HAP-1 (cell line): ENCODE measurements at regions of chr10 and their contacts with region 1.

Region 1: DNA sequence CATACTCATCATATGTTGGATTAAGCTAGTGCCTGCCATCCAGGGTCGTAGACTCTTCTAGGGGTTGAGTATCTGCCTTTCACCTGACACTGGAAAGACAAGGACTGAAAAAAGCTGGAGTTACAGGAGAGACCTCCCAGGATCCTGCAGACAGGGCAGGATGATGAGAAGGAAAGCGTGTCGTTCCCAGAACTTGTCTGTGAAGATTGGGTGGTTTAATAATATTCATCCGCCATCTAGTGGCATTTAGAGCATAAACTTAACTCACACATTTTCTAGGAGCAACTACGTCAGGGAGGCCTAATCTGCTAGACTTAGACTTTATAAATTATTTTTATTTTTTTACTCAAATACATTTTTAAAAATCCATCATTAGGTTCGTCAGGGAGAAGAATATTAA is 59.6 kb downstream of the ADRB1 start:
- DNase-seq: peak; percentile 35 to 71
- H3K4me3 ChIP-seq: no peak overlapping the region
- H3K4me1 ChIP-seq: 0 out of 2 replicates have a peak, but pooled peaks cover 2% of the 10 kb centered on the region
- H3K27me3 ChIP-seq: peaks cover 12% of the 10 kb centered on the region

Region 2: DNA sequence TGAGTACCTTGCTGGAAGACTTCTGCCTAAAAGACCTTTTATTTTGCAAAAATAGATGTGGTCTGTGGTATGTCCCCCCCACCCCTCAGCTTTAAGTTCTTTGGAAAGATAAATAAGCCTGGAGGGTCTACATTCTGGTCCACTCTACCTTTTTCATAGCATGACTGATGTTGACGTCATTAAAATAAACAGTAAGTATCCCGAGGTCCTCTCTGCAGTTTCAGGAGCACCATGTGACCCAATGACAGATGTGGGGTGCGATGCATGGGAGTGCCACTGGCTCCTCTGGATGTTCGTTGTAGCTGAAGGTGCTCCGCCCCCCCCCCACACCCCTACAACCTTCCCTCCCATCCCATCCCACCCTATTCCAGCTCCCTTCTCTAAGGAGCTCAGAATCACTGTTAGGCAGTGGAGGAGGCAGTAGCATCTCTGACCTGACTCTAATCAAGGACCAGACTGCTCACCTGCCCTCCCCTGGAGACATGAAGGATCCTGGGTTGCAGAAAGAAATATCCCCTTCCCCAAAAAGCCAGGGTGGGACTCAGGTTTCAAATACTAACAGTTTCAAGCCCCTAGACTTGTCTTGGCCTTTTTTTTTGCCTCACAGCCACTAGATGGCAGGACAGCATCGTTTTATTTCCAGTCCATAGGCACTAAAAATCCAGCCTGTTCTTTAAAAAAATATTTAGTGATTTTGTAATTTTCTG is 398.5 kb before region 1 on chr10:
- in situ Hi-C with region 1: loop called (anchors 5 kb)
- DNase-seq: peak; percentile 36 to 51
- H3K4me3 ChIP-seq: no peak overlapping the region
- H3K4me1 ChIP-seq: no peaks in the 10 kb centered on the region
- H3K27me3 ChIP-seq: no peaks in the 10 kb centered on the region

Region 3: GRCh38 chr10:113765910-113766309 is 337.4 kb before region 1 on chr10:
- in situ Hi-C with region 1: no loop called
- DNase-seq: no peak
- H3K4me3 ChIP-seq: no peak overlapping the region
- H3K4me1 ChIP-seq: peaks cover 5% of the 10 kb centered on the region; the same call in 1 of the 2 replicates
- H3K27me3 ChIP-seq: peaks cover 15% of the 10 kb centered on the region

Region 4: DNA sequence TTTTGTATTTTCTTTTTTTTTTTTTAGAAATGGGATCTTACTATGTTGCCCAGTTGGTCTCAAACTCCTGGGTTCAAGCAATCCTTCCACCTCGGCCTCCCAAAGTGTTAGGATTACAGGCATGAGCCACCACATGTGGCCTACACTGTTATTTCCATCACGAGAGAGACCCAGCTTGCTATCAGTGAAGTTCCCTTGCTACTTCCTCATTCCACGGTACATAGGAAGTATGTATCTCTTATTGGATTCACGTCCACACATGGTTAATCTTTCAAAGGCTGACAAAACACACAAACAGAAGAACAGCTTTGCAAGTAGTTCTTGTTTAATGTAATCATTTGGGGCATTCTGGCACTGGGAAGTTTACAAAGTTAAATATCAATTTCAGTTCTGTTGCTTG is 300.3 kb before region 1 on chr10:
- in situ Hi-C with region 1: loop called (anchors 5 kb)
- DNase-seq: no peak
- H3K4me3 ChIP-seq: no peak overlapping the region
- H3K4me1 ChIP-seq: no peaks in the 10 kb centered on the region; the same call in 1 of the 2 replicates
- H3K27me3 ChIP-seq: peaks cover 3% of the 10 kb centered on the region

Region 5: DNA sequence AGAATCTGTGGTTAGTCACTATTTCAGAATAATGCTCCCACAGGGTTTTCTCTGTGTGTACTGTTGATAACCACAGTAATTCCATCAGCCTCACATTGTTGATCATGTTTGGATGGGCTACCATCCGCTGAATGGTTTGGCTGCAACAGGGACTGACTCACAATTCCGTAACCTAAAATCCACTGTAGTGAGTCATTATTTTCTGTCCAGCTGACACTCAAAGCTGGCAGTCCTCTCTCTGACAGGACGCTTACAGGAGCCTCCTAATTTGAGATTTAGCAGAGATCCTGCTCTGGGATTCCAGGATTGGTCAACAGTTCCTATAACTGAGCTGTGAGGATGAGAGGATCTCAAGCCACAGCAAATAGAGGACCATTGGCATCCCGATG is 168.5 kb after region 1 on chr10:
- in situ Hi-C with region 1: no loop called
- DNase-seq: no peak
- H3K4me3 ChIP-seq: no peak overlapping the region
- H3K4me1 ChIP-seq: no peaks in the 10 kb centered on the region
- H3K27me3 ChIP-seq: no peaks in the 10 kb centered on the region; the same call in 1 of the 2 replicates

Region 6: DNA sequence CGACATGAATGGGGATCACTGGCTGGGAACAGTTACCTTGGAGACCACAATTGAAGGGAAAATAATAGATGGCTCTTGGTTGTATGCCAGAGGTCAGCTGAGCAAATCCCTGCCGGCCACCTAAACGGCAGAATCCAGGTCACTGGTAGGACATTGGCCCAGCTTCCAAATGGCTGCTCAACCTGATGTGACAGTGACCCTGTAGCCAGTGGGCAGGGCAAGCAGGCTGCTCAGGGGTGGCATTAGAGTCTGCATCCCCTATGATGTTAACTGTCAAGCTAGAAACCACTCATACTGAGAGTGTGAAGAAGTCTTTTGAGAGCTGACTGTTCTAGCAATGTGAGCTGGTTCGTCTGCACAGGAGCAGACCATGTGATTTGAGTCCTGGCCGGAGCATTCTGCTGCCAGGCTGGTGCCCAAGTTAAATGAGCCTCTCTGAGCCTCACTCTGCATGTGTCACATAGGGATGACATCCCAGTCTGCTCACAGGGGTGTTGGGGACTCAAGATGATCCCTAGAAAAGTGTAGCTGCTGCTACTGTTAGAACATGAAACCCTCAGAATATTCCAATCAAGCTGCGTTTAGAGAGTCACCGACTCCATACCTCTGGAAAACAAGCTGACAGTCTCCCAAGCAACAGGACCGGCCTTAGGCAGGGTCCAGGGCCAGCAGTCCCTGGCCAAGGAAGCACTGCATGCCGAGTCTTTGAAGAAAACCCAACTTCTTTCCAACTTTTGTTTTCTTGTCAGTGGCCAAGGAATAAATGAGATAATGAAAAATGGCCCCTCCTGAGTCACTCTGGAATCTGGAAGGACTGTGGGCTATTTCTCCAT is 205.5 kb after region 1 on chr10:
- in situ Hi-C with region 1: no loop called
- DNase-seq: no peak
- H3K4me3 ChIP-seq: no peak overlapping the region
- H3K4me1 ChIP-seq: peaks cover 4% of the 10 kb centered on the region; the same call in 1 of the 2 replicates
- H3K27me3 ChIP-seq: no peaks in the 10 kb centered on the region